Sciatic nerve (tissue), 2 donors: ENCODE measurements at regions of chr4 and their contacts with region 1.

Region 1: GRCh38 chr4:17544205-17544604 is 29.2 kb downstream of the CLRN2 start:
- DNase-seq: no peak
- ATAC-seq: peak; percentile 53

Region 2: DNA sequence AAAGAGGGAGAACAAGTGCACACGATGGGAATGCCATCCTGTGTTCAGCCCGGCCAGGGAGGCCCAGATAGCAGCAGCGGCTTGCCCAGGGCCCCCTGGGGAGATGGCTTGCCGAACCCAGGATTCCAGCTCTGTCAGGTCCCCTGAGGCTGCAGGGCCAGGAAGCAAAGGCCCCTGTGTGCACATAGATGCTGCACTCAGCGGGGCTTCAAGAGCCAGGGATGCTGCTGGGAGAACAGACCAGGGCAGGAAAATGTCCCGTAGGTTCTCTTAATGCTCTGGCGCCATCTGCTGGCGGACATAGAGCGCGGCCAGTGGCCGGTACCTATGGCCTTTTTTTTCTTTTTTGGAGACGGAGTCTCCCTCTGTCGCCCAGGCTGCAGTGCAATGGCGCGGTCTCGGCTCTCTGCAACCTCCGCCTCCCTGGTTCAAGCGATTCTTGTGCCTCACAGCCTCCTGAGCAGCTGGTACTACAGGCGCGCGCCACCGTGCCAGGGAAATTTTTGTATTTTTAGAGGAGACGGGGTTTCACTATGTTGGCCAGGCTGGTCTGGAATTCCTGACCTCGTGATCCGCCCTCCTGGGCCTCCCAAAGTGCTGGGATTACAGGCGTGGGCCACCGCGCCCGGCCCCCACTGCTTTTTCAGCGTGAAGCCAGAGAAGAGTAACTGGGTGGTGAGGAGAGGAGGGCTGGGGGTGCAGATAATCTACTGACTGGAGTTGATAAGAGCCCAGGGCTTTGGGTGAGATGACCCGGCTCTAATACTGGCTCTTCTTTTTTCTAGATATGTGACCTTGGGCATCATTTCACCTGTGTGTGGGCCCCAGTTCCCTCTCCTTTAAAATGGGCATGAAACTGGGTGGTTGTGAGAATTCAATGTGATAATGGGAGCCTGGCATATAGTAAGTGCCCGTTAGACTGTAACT is 92.8 kb after region 1 on chr4:
- intact Hi-C with region 1: loop called (anchors 10 kb)
- DNase-seq: peak; percentile 89
- ATAC-seq: peak; percentile 83